PC-9 (cell line): ENCODE measurements at regions of chr4 and their contacts with region 1.

Region 1: DNA sequence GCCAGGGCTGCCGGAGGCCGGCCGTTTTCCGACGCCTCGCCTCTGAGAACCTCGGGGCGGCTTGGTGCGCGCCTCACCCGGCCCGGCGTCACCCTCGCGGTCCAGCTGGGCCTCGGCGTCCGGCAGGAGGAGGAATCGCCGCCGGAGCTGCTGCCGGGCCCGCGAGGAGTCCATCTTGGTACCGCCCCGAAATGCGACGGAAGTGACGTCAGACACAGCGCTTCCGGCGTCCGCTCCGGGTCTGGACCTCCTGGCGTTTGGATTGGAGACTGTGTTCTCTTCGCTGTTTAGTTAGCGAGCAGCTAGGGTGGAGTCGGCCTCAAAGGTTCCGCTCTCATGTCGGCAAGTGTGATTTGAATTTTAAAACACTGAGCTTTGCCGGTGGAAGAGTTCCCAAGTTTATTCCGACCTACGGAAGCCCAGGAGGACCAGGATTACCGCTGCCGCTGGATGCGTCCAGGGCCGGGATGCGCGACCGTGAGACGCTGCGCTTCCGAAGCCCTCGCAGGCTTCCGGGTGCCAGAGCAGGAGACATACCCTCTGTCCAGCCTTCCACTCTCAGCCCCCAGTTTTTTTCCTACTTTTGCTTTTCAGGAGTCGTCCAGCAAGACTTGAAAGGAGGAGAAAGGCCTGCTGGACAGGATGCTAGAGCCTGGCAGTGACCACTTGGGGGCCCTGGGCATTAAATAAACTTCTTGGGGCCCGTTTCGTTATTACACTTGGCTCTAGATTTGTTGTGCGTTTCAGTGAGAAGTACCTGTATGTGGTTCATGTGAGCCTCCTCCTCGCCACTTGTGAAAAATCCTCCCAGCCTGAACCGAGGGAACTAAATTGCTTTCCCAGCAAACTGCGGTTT is at the start of gene TMEM128:
- DNase-seq: peak; percentile 82 to 84
- H3K4me3 ChIP-seq: peak within 1 kb of the TSS; percentile 90
- H3K27ac ChIP-seq: peak within 1 kb of the TSS; percentile 76
- H3K4me1 ChIP-seq: 0 out of 2 replicates have a peak, but pooled peaks cover 12% of the 10 kb centered on the region
- H3K27me3 ChIP-seq: no peaks in the 10 kb centered on the region
- CTCF ChIP-seq: no peak
- total RNA-seq, gene TMEM128: 18.1 and 21.4 TPM in 2 replicates

Region 2: DNA sequence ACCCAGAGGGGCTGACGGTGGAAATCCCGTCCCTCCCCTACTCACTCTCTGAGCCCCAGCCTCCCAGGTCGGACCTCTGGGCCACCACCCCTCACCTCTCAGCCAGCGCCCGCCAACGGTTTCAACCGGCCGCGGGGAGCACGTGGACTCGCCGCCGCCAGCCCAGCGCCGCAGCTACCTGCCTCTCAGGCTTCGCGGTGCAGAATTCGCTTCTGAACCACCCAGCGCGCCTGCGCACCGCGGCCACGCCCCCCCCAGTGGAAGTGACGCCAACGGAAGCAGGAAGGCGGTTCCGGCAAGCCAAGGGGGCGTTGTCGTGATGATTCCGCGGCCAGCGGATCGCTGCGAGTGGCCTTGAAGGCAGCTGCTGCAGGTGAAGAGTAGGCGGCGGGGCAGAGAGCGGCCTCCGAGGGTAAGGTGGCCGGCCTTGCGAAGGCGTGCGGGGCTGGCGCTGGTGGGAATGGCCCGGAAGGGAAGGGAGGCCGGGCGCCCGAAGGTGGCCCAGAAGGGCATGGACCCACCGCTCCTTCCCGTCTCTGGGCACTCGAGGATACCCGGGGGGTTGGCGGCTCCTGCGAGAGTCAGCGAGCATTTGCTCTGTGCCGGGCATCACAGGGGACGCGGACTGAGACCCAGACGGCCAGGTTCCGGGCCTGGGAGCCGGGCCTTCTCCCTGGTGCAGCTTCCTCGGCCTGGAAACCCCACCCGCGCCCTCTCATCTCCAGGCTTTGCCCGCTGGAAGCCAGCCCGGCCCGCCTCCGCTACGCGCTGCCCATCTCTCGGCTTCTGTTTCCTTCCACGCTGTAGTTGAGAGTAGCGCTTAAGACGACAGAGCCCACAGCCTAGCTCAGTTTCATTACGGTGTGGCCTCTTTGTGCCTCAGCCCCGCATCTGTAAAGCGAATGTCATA is 41.9 kb after region 1 on chr4 and contains the starts of genes LYAR and ZBTB49:
- CTCF ChIA-PET with region 1: no interaction called
- POLR2A ChIA-PET with region 1: no interaction called
- intact Hi-C with region 1: loop called (anchors 2 kb)
- DNase-seq: peak; percentile 85 to 96
- H3K4me3 ChIP-seq: peak within 1 kb of the TSS; percentile 73
- H3K27ac ChIP-seq: no peak within 1 kb of the TSS
- H3K4me1 ChIP-seq: peaks cover 12% of the 10 kb centered on the region
- H3K27me3 ChIP-seq: no peaks in the 10 kb centered on the region
- CTCF ChIP-seq: no peak
- total RNA-seq, gene LYAR: 10.2 and 15.7 TPM in 2 replicates
- total RNA-seq, gene ZBTB49: 4.6 and 5.3 TPM in 2 replicates

Region 3: GRCh38 chr4:4334798-4335520 is 86.7 kb after region 1 on chr4:
- CTCF ChIA-PET with region 1: interaction called, 11 read pairs
- POLR2A ChIA-PET with region 1: no interaction called
- intact Hi-C with region 1: loop called (anchors 2 kb)
- DNase-seq: peak; percentile 40 to 67
- H3K4me3 ChIP-seq: no peak overlapping the region
- H3K27ac ChIP-seq: no peak overlapping the region
- H3K4me1 ChIP-seq: no peaks in the 10 kb centered on the region
- H3K27me3 ChIP-seq: peaks cover 21% of the 10 kb centered on the region
- CTCF ChIP-seq: peak; percentile 68

Region 4: DNA sequence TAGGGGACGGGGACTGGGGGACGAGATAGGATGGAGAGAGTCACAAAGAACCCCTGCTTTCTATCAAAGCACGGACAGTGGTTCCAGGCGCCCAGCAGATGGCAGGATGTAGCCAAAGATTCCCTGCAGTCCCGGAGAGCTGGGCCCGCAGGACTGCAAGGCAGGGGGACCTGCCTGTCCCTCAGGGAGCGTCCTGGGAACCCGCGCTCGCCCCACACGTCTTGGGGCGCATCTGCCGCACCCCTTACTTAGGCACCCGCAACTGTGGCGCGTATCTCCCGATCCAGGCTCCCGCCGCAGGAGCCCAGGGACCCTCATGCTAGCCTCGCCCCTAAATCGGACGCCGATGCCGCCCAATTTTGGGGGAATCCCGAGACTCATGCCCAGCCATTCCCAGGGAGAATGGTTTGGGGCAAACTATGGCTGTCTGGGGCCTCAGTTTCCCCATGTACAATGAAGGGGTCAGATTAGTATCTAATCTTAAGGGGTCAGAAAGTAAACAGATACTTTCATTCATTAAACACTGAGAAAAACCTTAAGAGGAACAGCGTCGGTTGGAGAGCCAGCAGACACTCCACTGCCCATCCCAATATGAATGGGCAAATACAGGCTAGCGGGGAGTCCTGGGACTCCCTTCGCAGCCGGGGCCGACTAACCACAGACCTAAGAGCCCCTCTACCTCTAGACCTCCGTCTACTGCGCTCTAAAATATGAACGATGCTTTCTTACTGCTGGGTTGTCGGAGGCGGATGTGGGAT is 802.4 kb after region 1 on chr4:
- CTCF ChIA-PET with region 1: interaction called, 11 read pairs
- POLR2A ChIA-PET with region 1: no interaction called
- intact Hi-C with region 1: no loop called
- DNase-seq: peak in 1 of 2 experiments; percentile 22
- H3K4me3 ChIP-seq: no peak overlapping the region
- H3K27ac ChIP-seq: no peak overlapping the region
- H3K4me1 ChIP-seq: no peaks in the 10 kb centered on the region
- H3K27me3 ChIP-seq: peaks cover 23% of the 10 kb centered on the region
- CTCF ChIP-seq: peak; percentile 60